HepG2 (cell line): ENCODE measurements at regions of chr5 and their contacts with region 1.

Region 1: DNA sequence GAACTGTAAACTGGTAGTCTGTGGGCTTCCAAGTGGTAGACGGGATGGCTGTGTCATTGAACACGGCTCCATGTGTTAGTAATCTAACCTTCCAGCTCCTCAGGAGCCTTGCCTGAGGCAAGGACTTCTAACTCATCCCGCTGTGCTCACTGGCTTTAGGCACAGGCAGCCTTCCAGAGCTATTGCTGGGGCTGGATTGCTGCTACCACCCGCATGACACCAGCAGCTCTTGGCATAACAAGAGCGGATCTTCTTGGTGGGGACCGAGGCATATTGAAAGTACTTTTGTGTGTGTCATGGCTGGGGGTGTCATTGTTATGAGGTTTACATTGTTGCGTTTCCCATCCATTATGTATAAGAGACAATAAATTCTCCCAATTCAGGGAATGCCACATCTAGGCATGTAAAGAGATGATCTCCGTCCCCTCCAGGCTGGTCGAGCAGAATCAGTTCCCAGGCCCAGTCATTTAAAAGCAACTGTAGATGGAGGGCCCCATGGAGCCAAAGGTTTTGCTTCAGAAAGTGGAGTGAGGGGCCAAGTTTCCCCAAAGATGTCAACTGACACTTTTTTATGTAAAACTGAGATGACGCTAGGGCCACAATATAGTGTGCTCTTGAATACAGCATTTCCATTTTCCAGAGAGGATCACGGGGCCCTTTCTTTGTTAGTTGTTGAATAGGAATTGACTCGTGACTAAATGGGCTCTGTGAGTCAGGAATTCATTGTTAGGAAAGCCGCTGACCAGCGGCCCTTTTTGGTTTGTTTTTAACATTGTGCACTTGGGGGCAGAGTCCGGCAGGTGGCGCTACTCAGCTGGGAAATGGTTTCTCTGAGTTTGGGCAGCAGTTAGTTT is 759.6 kb downstream of the TAF11L14 start:
- DNase-seq: peak; percentile 15
- ATAC-seq: peak; percentile 79
- H3K4me3 ChIP-seq: no peak overlapping the region
- H3K27ac ChIP-seq: no peak overlapping the region
- H3K4me1 ChIP-seq: no peaks in the 10 kb centered on the region
- H3K27me3 ChIP-seq: no peaks in the 10 kb centered on the region
- CTCF ChIP-seq: peak; percentile 73
- EP300 ChIP-seq: no peak
- POLR2A ChIP-seq: no peak
- RAD21 ChIP-seq: 0 out of 2 replicates have a peak, but pooled peaks have one; percentile 20

Region 2: DNA sequence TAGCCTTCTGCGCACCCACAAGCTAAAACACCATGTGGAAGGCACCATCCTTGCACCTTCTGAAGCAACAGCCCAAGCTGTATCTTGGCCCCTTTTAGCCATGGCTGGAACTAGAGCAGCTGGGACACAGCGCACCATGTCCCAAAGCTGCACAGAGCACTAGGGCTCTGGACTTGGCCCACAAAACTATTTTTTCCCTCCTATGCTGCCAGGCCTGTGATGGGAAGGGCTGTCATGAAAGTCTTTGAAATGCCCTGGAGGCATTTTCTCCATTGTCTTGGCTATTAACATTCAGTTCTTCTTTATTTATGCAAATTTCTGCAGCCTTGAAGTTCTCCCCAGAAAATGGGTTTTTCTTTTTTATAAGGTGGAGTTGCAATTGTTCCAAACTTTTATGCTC is 236.6 kb after region 1 on chr5:
- CTCF ChIA-PET with region 1: no interaction called
- POLR2A ChIA-PET with region 1: no interaction called
- in situ Hi-C with region 1: no loop called
- intact Hi-C with region 1: no loop called
- DNase-seq: no peak
- ATAC-seq: no peak
- H3K4me3 ChIP-seq: no peak overlapping the region
- H3K27ac ChIP-seq: no peak overlapping the region
- H3K4me1 ChIP-seq: no peaks in the 10 kb centered on the region
- H3K27me3 ChIP-seq: no peaks in the 10 kb centered on the region
- CTCF ChIP-seq: no peak
- EP300 ChIP-seq: no peak
- POLR2A ChIP-seq: no peak
- RAD21 ChIP-seq: no peak

Region 3: GRCh38 chr5:18699681-18700080 is 305.9 kb after region 1 on chr5:
- CTCF ChIA-PET with region 1: interaction called, 5 read pairs
- POLR2A ChIA-PET with region 1: no interaction called
- in situ Hi-C with region 1: no loop called
- intact Hi-C with region 1: loop called (anchors 1 kb)
- DNase-seq: no peak
- ATAC-seq: no peak
- H3K4me3 ChIP-seq: no peak overlapping the region
- H3K27ac ChIP-seq: no peak overlapping the region
- H3K4me1 ChIP-seq: peaks cover 7% of the 10 kb centered on the region; the same call in 1 of the 2 replicates
- H3K27me3 ChIP-seq: no peaks in the 10 kb centered on the region
- CTCF ChIP-seq: no peak
- EP300 ChIP-seq: no peak
- POLR2A ChIP-seq: no peak
- RAD21 ChIP-seq: no peak

Region 4: GRCh38 chr5:19608444-19609002 is 1214.7 kb after region 1 on chr5:
- CTCF ChIA-PET with region 1: no interaction called
- POLR2A ChIA-PET with region 1: no interaction called
- in situ Hi-C with region 1: no loop called
- intact Hi-C with region 1: loop called (anchors 10 kb)
- DNase-seq: no peak
- ATAC-seq: no peak
- H3K4me3 ChIP-seq: no peak overlapping the region
- H3K27ac ChIP-seq: no peak overlapping the region
- H3K4me1 ChIP-seq: no peaks in the 10 kb centered on the region
- H3K27me3 ChIP-seq: no peaks in the 10 kb centered on the region
- CTCF ChIP-seq: no peak
- EP300 ChIP-seq: no peak
- POLR2A ChIP-seq: no peak
- RAD21 ChIP-seq: no peak